ENCODE measurements at regions of chr22 and their contacts with region 1.

Region 1: GRCh38 chr22:46006379-46007002 is 29.5 kb upstream of the WNT7B start:
- H3K4me3 ChIP-seq: no peak overlapping the region
- H3K27ac ChIP-seq: peak overlapping the region; percentile 10; the same call in 1 of the 2 replicates
- H3K4me1 ChIP-seq: no peaks in the 10 kb centered on the region; the same call in 1 of the 2 replicates
- CTCF ChIP-seq: peak; percentile 96

Region 2: DNA sequence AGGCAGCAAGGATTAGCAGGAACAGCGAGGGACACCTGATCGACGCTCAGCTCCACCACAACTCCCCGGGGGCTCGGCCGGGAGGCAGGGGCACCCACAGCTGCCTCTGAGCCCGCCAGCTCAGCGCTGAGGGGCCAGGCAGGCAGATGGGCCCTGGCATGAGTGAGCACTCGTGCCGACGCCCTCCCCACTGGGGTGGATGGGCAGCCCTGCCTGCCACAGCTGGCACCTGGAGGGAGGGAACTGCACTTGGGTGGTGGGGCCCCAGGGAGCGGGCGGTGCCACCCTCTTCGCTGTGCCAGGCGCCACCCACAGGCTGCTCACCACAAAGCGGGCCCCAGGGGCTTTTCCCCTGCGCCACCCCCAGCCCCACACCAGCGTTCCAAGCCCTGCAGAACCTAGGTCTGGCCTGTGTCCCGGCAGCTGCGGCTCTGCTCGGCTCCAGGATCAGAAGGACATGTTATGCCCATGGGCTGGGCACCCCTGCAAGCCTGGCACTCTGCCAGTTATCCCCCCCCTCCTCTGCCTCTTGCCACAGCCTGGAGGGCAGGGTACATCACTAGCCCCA is 58.3 kb before region 1 on chr22:
- CTCF ChIA-PET with region 1: no interaction called
- POLR2A ChIA-PET with region 1: no interaction called
- H3K4me3 ChIP-seq: no peak overlapping the region
- H3K27ac ChIP-seq: no peak overlapping the region
- H3K4me1 ChIP-seq: no peaks in the 10 kb centered on the region
- CTCF ChIP-seq: no peak

Region 3: DNA sequence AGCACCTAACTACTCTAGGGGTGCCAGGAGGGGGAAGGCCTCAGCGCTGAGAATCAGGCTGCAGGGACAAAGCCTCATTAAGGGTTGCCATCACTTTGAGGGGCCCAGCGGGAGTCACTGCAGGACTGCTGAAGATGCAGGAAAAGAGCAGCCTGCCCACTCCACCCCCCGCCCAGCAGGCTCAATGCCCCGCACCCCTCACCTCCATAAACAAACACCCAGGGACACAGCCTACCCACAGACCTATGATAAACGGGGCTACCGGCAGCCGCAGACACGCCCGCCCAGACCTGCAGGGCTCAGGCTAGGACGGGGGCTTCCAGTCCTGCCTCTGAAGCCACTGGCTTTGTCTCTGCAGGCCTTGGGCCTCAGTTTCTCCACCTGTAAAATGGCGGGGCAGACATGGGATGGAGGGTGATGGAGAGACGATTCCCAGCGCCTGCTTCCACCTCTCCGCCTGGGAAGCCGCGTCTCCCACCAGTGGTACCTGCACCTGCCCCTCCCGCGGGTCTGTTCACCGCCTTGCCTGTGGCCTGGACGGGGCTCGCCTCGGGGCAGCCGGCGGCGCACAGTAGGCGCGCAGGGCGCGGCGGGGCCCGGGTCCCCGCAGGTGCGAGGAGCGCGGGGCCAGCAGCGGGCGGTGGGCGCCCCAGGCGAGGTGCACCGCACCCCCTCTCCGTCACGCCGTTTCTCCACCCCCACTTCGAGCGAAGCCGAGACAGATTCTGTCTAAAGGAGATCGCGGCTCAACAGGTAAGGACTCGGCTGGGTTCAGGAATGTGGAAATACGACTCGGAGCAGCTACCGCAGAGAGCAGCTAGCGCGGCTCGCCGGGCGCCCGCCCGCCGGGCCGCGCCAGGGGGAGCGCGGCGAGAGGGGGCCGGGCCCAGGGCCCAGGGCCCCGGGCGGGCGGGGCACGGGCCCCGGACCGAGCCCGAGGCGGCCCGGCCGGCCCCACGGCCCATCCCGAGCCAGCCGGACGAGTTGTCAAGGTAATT is 31.0 kb before region 1 on chr22:
- CTCF ChIA-PET with region 1: no interaction called
- POLR2A ChIA-PET with region 1: no interaction called
- H3K4me3 ChIP-seq: peak overlapping the region; percentile 46
- H3K27ac ChIP-seq: no peak overlapping the region
- H3K4me1 ChIP-seq: peaks cover 4% of the 10 kb centered on the region
- CTCF ChIP-seq: no peak

Region 4: DNA sequence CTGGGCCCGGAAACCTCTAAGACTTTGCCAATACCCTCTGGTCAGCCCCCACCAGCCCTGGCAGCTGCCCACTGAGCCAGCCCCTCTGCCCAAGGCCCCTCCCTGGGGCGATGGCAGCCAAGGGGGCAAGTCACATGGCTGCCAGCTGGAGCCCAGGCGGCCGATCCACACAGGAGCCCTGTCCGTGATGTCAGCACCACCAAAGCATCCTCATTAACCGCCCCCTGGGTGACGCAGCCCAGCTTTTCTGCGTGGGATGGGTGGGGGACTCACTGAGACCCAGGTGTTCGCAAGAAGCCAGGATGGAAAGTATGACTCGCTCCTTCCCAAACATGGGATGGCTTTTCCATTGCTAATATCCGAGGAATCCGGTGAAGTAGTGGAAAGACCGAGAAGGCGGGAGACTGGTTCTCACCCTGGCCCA is 17.1 kb after region 1 on chr22:
- CTCF ChIA-PET with region 1: interaction called, 82 read pairs
- POLR2A ChIA-PET with region 1: no interaction called
- H3K4me3 ChIP-seq: no peak overlapping the region
- H3K27ac ChIP-seq: no peak overlapping the region
- H3K4me1 ChIP-seq: no peaks in the 10 kb centered on the region
- CTCF ChIP-seq: no peak

Region 5: DNA sequence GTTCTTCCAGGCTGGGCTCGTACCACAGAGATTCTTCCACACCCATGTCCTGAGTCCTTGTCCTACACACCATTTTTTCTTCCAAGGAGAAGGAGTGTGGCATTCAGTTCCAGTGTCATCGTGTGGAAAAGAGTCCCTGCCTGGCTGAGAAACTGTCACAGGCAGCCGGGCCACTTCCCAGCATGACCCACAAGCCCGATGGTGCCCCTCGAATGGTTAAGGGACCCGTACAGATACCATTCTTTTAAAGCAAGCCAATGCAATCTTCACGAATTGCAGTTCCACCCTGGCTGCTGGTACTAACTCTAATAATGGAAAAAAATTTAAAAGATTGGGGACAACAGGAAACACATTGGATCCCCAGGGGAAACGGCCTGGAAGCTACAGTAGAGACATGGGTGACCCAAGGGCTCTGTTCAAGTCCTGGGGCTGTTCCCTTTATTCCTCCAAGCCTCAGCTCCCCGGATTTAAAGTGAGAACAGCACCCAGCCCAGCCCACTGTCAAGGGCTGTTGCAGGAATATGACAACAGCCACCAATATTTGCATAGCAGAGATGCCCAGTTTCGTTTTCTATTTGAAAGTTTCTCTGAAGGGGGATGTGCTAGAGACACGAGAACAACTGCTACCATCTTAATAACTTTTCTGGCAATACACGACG is 51.4 kb after region 1 on chr22:
- CTCF ChIA-PET with region 1: interaction called, 33 read pairs
- POLR2A ChIA-PET with region 1: interaction called, 7 read pairs
- H3K4me3 ChIP-seq: no peak overlapping the region
- H3K27ac ChIP-seq: no peak overlapping the region
- H3K4me1 ChIP-seq: peaks cover 11% of the 10 kb centered on the region
- CTCF ChIP-seq: no peak

Region 6: GRCh38 chr22:46079861-46080821 is 73.7 kb after region 1 on chr22:
- CTCF ChIA-PET with region 1: interaction called, 24 read pairs
- POLR2A ChIA-PET with region 1: interaction called, 25 read pairs
- H3K4me3 ChIP-seq: no peak overlapping the region
- H3K27ac ChIP-seq: 0 out of 2 replicates have a peak overlapping the region, but pooled peaks have one; percentile 27
- H3K4me1 ChIP-seq: peaks cover 16% of the 10 kb centered on the region
- CTCF ChIP-seq: peak; percentile 34; the same call in 1 of the 2 replicates

Region 7: DNA sequence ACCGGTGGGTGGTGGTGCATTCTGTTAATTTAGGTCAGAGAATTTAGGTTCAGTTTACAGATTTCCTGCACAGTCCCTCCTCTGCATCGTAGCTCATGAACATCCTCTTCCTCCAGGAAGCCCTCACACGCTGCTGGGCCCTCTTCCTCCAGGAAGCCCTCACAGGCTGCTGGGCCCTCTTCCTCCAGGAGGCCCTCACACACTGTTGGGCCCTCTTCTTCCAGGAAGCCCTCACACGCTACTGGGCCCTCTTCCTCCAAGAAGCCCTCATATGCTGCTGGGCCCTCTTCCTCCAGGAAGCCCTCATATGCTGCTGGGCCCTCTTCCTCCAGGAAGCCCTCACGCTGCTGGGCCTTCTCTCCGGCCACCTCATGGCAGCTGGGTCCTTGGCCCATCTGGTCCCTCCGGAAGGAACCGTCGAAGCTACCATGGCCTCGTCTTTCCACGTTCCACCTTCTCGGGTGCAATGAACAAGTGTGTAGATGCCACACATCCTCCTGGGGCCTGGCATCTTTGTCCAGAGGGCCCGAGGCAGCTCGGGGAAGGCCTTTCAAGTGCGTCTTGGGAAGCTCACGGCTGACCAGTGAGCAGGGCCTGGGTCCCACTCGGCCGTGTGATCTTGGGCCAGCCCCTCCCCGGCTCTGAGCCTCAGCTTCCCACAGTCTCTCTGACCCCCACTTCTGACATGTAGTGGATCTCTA is 84.9 kb after region 1 on chr22:
- CTCF ChIA-PET with region 1: interaction called, 20 read pairs
- POLR2A ChIA-PET with region 1: interaction called, 5 read pairs
- H3K4me3 ChIP-seq: no peak overlapping the region
- H3K27ac ChIP-seq: no peak overlapping the region
- H3K4me1 ChIP-seq: peaks cover 5% of the 10 kb centered on the region
- CTCF ChIP-seq: no peak

Region 8: GRCh38 chr22:46116491-46116958 is 110.0 kb after region 1 on chr22:
- CTCF ChIA-PET with region 1: interaction called, 251 read pairs
- POLR2A ChIA-PET with region 1: interaction called, 14 read pairs
- H3K4me3 ChIP-seq: no peak overlapping the region
- H3K27ac ChIP-seq: no peak overlapping the region
- H3K4me1 ChIP-seq: no peaks in the 10 kb centered on the region
- CTCF ChIP-seq: peak; percentile 98

Region 9: DNA sequence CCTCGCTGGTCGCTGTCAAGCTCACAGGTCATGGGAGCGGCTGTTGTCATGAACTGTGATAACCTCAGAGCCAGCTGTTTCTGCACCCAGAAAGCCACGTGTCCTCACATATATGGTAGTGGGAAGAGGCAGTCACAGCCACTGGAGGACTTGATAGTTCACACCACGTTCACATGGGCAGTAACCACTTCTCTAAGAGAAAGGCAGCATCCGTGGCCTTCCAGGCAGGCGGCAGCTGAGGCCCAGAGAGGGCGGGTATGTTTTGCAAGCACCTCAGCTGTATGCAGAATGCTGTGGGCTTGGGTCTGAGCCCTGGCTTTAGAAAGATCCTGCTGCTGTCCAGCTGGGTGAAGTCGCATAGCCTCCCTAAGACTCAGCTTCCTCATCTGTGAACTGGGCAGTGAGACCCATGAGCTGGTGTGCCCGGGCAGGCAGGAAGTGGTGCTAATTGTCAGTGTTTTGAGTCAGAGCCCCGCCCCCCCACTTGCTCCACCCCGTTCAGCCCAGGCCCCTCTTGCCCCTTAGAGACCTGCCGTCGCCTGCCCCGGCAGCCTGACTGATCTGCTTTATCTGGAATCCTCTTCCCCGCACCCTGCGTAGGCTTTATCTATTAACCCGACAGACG is 274.6 kb after region 1 on chr22:
- CTCF ChIA-PET with region 1: no interaction called
- POLR2A ChIA-PET with region 1: no interaction called
- H3K4me3 ChIP-seq: no peak overlapping the region
- H3K27ac ChIP-seq: no peak overlapping the region
- H3K4me1 ChIP-seq: no peaks in the 10 kb centered on the region
- CTCF ChIP-seq: no peak

Measured in HEK293 (cell line).